A549 (cell line): ENCODE measurements at regions of chr16 and their contacts with region 1.

Region 1: GRCh38 chr16:23435500-23435899 is 17.5 kb downstream of the COG7 start:
- DNase-seq: peak; percentile 73 to 74
- ATAC-seq: peak; percentile 94 to 99
- H3K4me3 ChIP-seq: no peak overlapping the region
- H3K27ac ChIP-seq: no peak overlapping the region
- H3K4me1 ChIP-seq: no peaks in the 10 kb centered on the region
- CTCF ChIP-seq: peak; percentile 91
- EP300 ChIP-seq: no peak
- POLR2A ChIP-seq: no peak
- RAD21 ChIP-seq: peak; percentile 65 to 77

Region 2: DNA sequence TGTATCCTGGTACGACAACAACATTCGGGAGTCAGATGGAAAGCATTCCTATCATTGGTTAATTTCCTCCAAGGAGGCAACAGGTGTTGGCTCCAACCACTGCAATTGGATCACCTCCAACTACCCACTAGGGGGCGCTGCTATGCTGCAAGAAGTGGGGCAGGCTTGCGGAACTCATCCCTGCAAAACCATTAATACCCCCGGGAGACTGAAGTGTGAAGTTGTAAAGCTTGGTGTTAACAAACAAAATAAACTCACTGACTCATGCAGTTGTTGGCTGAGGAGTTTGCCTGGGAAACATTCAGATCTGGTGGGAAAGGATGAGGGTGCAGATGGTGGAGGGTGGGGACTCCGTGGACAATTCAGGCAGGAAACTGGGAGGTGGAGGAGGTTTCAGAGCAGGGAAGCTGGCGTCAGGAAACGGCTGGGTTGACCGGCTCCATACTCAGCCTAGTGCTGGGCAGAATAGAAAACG is 536.6 kb before region 1 on chr16:
- CTCF ChIA-PET with region 1: interaction called, 14 read pairs
- POLR2A ChIA-PET with region 1: no interaction called
- DNase-seq: peak; percentile 33 to 73
- ATAC-seq: peak; percentile 73 to 83
- H3K4me3 ChIP-seq: no peak overlapping the region
- H3K27ac ChIP-seq: no peak overlapping the region
- H3K4me1 ChIP-seq: no peaks in the 10 kb centered on the region
- CTCF ChIP-seq: peak; percentile 71
- EP300 ChIP-seq: no peak
- POLR2A ChIP-seq: no peak
- RAD21 ChIP-seq: peak; percentile 69 to 84

Region 3: GRCh38 chr16:23182460-23183309 is 252.8 kb before region 1 on chr16 and contains the start of gene SCNN1G:
- CTCF ChIA-PET with region 1: interaction called, 336 read pairs
- POLR2A ChIA-PET with region 1: no interaction called
- DNase-seq: peak; percentile 78 to 83
- ATAC-seq: peak; percentile 99
- H3K4me3 ChIP-seq: peak within 1 kb of the TSS; percentile 44
- H3K27ac ChIP-seq: peak within 1 kb of the TSS; percentile 51 to 53; a peak in 3 of 6 replicates
- H3K4me1 ChIP-seq: peaks cover 8% of the 10 kb centered on the region; the same call in 2 of the 3 replicates
- CTCF ChIP-seq: peak; percentile 97
- EP300 ChIP-seq: no peak
- POLR2A ChIP-seq: no peak
- RAD21 ChIP-seq: peak; percentile 83 to 96
- polyA plus RNA-seq, gene SCNN1G: 0.05 and 0.20 TPM in 2 replicates

Region 4: DNA sequence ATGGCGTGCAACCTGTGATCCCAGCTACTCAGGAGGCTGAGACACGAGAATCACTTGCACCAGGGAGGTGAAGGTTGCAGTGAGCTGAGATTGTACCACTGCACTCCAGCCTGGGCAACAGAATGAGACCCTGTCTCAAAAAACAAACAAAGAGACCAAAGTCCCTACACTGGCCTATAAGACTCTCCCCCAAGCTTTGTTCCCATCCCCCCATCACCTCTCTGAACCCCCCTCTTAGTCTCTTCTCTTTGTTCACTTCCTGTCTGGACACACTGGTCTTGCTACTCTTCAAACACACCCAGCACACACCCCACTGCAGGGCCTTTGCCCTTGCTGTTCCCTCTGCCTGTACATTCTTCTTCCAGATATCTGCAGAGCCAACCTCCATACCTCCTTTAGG is 141.2 kb before region 1 on chr16:
- CTCF ChIA-PET with region 1: interaction called, 11 read pairs
- POLR2A ChIA-PET with region 1: no interaction called
- DNase-seq: no peak
- ATAC-seq: no peak
- H3K4me3 ChIP-seq: no peak overlapping the region
- H3K27ac ChIP-seq: no peak overlapping the region
- H3K4me1 ChIP-seq: no peaks in the 10 kb centered on the region
- CTCF ChIP-seq: no peak
- EP300 ChIP-seq: no peak
- POLR2A ChIP-seq: no peak
- RAD21 ChIP-seq: no peak

Region 5: GRCh38 chr16:23398987-23399805 is 36.3 kb before region 1 on chr16:
- CTCF ChIA-PET with region 1: interaction called, 23 read pairs
- POLR2A ChIA-PET with region 1: no interaction called
- DNase-seq: no peak
- ATAC-seq: no peak
- H3K4me3 ChIP-seq: no peak overlapping the region
- H3K27ac ChIP-seq: no peak overlapping the region
- H3K4me1 ChIP-seq: no peaks in the 10 kb centered on the region
- CTCF ChIP-seq: no peak
- EP300 ChIP-seq: no peak
- POLR2A ChIP-seq: no peak
- RAD21 ChIP-seq: no peak

Region 6: DNA sequence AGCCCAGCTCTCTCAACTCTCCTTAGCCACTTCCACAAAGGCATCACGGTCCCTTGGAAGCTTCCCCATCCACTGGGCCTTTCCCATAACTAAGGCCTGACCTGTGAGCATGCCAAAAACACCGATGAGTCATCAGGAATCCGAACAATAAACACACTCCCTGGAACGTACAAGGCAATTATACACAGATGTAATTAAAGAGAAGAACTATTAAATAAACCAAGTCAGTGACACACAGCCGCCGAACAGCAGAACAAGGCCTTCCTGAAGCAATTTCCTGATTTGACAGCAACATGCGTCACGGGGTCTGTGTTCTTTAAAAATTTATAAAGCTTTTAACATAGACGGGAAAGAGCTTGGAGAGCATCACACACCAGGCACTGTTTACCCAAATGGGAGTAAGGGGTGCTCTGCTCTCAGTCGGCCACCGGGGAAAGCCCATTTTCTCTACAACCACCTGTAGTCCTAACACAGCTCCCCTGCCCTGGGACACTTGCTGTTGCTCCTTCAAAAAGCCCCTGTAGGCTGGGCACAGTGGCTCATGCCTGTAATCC is 11.9 kb before region 1 on chr16:
- CTCF ChIA-PET with region 1: interaction called, 56 read pairs
- POLR2A ChIA-PET with region 1: no interaction called
- DNase-seq: peak; percentile 60 to 93
- ATAC-seq: peak; percentile 86 to 87
- H3K4me3 ChIP-seq: 0 out of 3 replicates have a peak overlapping the region, but pooled peaks have one; percentile 14
- H3K27ac ChIP-seq: peak overlapping the region; percentile 84 to 93
- H3K4me1 ChIP-seq: peaks cover 29% of the 10 kb centered on the region
- CTCF ChIP-seq: no peak
- EP300 ChIP-seq: no peak
- POLR2A ChIP-seq: no peak
- RAD21 ChIP-seq: 0 out of 5 replicates have a peak, but pooled peaks of 1 of the 2 experiments have one; percentile 11